Lower leg skin (tissue), 4 donors: ENCODE measurements at regions of chr13 and their contacts with region 1.

Region 1: GRCh38 chr13:53105890-53106289 is 77.3 kb downstream of the OLFM4 start:
- DNase-seq: no peak
- H3K4me3 ChIP-seq: no peak overlapping the region
- CTCF ChIP-seq: no peak
- POLR2A ChIP-seq: no peak

Region 2: DNA sequence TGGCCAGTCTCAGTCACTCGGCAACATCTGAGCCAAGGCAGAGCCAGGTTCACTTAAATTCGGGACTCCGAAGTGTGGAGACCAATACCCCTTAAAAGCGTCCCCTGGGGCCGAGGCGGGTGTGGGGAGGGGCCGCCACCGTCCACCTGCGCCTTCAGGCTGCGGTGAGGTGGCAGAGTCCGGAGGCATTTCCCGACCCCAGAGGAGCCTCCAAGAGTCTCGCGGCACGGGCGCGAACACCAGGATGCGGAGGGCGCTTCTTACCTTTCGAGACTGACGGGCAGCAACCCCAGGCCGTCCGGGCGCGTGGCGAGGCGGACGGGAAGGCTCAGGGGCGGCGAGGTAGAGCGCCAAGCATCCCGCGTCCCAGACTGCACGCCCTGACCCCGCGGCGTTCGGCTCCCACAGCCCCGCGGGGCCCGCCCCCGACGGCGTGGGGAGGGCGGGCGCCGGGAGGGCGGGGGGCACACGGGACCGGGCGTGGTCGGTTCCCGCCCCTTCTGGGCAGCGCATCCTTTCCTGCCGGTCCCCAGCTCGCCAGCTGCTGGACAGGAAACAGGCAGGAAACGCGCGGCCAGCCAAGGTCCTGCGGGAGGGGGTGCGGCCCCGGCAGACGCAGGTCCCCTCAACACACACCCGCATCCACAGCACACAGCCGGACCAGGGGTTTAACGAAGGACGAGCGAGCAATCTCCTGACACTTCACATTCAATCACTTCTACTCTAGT is 700.0 kb before region 1 on chr13 and contains the start of gene THSD1:
- intact Hi-C with region 1: loop called (anchors 5 kb)
- DNase-seq: peak; percentile 36 to 89
- H3K4me3 ChIP-seq: peak within 1 kb of the TSS; percentile 53
- CTCF ChIP-seq: no peak
- POLR2A ChIP-seq: no peak
- total RNA-seq, gene THSD1: 5.1 to 9.5 (median 6.3) TPM

Region 3: DNA sequence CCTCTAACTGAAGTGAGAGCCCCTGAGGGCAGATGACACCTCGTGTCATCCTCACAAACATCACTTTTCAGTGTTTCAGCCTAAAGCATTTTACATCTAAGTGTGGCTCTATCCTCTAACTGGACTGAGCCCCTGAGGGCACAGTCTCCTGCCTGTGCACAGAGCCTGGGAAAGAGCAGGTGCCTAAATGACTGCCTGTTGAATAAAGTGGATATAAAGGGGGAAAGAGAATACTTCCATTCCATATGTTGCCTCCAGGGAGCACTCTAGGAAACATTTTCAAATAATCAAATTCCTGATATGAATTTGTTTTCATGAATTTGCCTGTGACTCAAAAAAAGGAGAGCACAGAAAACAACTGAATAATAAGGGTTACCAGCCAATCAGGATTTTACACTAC is 398.5 kb before region 1 on chr13:
- intact Hi-C with region 1: no loop called
- DNase-seq: no peak
- H3K4me3 ChIP-seq: no peak overlapping the region
- CTCF ChIP-seq: no peak
- POLR2A ChIP-seq: no peak

Region 4: GRCh38 chr13:53004573-53004972 is 101.3 kb before region 1 on chr13:
- intact Hi-C with region 1: no loop called
- DNase-seq: no peak
- H3K4me3 ChIP-seq: no peak overlapping the region
- CTCF ChIP-seq: no peak
- POLR2A ChIP-seq: no peak

Region 5: DNA sequence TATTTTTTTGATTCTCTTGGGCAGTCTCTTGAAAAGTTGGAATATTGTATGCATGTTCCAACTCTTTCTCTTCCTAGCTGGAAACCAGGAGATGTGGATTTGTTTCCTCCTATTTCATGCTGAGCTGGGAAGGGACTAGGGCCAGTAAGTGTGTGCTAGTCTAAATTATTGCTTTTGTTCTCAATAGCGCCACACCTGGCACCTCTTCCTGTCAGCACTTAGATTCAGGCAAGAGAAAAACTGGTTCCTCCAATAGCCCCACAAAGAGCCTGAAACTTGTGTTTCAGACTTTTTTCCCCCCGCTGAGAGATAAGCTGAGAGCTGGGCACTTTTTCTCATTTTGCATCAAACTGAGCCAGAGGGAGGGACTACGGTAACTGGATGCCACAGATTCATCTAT is 276.1 kb after region 1 on chr13:
- intact Hi-C with region 1: no loop called
- DNase-seq: no peak
- H3K4me3 ChIP-seq: no peak overlapping the region
- CTCF ChIP-seq: no peak
- POLR2A ChIP-seq: no peak